ENCODE measurements at regions of chr1 and their contacts with region 1.

Region 1: DNA sequence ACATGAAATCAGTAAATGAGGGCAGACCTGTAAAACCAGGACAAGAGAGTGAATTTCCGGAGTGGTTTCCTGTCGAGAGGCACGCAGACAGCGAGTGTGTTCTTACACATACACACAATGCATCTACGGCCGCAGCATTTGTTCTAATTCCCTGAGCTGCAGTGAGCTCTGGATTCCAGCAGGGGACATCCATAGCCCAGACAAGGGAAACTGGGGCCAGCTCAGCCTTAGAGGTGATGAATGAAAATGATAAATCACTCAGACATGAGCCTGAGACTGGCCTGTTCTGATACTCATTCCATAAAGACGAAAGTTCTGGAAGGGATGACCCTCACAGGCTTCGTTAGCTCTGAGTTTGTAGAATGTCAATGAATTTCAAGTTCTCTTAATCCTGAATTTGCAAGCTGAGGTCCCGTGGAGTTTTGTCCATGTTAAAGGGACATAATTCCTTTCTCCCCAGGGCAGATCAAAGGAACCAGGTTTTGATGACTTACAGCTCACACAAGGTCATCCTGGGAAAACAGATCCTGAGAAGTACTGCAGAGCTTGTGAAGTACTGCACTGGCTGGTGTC is 207.9 kb upstream of the C1orf87 start:
- DNase-seq: no peak

Region 2: GRCh38 chr1:60762176-60762575 is 480.7 kb after region 1 on chr1:
- intact Hi-C with region 1: loop called (anchors 5 kb)
- DNase-seq: no peak

Region 3: GRCh38 chr1:61043010-61043820 is 761.8 kb after region 1 on chr1:
- intact Hi-C with region 1: loop called (anchors 5 kb)
- DNase-seq: peak; percentile 94

Region 4: GRCh38 chr1:61851849-61852669 is 1570.6 kb after region 1 on chr1:
- intact Hi-C with region 1: loop called (anchors 10 kb)
- DNase-seq: no peak

Measured in cardiac septum (tissue), 1 donor.